Activated B cell treated with CpG ODN at 0.5 μM for 24 hours (primary cell): ENCODE measurements at regions of chr16 and their contacts with region 1.

Region 1: DNA sequence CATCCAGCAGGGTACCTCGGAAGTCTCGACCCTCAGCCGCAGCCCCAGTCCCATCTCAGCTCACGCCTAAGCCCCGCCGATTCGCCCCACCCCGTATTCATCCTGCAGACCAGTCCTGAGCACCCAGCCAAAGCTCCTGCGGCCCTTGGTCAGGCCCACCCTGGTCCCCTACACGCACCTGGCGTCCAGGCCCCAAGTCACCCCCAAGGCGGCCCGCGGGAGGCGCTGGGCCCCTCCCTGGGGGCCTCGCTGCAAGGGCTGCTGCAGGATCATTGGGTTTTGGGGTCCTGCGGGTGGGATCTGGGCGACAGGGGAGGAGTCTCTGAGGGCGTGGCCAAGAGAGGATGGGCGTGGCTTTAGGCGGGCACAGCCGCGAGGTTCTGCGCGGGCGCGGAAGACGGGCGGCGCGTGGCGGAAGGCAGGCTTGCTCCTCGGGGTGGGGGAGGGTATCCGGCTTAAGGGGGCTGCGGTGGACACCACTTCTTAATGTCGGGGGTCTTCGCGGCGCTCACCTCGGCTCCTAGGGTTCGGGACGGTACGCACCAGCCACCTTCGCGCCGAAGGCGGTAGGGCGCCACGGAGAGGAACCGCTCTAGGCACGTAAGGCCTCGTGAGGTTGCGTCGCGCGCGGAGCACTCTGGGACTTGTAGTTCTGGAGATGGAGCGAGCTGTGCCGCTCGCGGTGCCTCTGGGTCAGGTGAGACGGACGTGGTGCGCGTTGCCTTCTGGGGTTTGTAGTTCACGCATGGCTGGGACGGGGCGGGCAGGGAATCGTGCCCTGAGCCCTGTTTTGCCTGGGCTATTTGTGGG is at the starts of genes HCFC1R1 and THOC6:
- DNase-seq: peak; percentile 93
- ATAC-seq: peak; percentile 76
- H3K4me3 Mint-ChIP-seq: peak within 1 kb of the TSS; percentile 92
- H3K27ac Mint-ChIP-seq: peak within 1 kb of the TSS; percentile 99
- H3K4me1 Mint-ChIP-seq: peaks cover 45% of the 10 kb centered on the region
- H3K27me3 Mint-ChIP-seq: peaks cover 1% of the 10 kb centered on the region
- CTCF ChIP-seq: no peak
- total RNA-seq, gene HCFC1R1: 17.7 and 20.4 TPM in 2 replicates
- total RNA-seq, gene THOC6: 45.8 and 47.1 TPM in 2 replicates

Region 2: DNA sequence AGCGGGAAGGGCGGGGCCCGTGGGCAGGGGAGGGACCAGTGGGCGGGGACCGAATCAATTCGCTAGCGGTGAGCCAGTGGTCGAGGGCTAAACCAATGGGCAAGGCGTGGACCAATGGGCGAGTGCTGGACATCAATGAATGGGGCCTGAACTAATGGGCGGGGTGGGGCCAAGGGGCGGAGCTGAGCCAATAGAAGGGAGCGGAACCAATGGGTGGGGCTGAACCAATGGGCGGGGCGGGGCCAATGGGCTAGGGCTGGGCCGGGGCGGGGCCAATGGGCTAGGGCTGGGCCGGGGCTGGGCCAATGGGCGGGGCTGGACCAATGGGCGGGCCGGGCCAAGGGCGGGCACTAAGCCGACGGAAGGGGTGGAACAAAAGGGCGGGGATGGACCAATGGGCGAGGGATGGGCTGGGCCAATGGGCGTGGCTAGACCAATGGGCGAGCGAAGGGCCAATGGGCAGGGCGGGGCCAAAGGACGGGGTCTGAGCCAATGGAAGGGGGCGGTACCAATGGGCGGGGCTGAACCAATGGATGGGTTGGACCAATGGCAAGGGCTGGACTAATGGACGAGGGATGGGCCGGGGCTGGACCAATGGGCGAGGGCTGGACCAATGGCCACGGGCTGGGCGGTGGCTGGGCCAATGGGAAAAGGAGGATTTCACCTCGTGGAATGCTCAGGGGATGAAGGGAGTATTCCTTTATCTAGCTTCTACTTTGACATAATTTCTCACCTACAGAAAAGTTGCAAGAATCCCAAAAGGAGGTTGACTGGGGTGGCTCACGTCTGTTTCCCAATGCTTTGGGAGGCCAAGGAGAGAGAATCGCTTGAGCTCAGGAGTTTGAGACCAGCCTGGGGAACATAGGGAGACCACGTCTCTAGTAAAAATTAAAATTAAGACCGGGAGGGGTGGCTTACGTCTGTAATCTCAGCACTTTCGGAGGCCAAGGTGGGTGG is 118.2 kb before region 1 on chr16:
- CTCF ChIA-PET with region 1: no interaction called
- POLR2A ChIA-PET with region 1: no interaction called
- intact Hi-C with region 1: loop called (anchors 5 kb)
- DNase-seq: peak; percentile 82
- ATAC-seq: peak; percentile 80
- H3K4me3 Mint-ChIP-seq: peak overlapping the region; percentile 91
- H3K27ac Mint-ChIP-seq: peak overlapping the region; percentile 41
- H3K4me1 Mint-ChIP-seq: peaks cover 27% of the 10 kb centered on the region
- H3K27me3 Mint-ChIP-seq: no peaks in the 10 kb centered on the region
- CTCF ChIP-seq: no peak

Region 3: DNA sequence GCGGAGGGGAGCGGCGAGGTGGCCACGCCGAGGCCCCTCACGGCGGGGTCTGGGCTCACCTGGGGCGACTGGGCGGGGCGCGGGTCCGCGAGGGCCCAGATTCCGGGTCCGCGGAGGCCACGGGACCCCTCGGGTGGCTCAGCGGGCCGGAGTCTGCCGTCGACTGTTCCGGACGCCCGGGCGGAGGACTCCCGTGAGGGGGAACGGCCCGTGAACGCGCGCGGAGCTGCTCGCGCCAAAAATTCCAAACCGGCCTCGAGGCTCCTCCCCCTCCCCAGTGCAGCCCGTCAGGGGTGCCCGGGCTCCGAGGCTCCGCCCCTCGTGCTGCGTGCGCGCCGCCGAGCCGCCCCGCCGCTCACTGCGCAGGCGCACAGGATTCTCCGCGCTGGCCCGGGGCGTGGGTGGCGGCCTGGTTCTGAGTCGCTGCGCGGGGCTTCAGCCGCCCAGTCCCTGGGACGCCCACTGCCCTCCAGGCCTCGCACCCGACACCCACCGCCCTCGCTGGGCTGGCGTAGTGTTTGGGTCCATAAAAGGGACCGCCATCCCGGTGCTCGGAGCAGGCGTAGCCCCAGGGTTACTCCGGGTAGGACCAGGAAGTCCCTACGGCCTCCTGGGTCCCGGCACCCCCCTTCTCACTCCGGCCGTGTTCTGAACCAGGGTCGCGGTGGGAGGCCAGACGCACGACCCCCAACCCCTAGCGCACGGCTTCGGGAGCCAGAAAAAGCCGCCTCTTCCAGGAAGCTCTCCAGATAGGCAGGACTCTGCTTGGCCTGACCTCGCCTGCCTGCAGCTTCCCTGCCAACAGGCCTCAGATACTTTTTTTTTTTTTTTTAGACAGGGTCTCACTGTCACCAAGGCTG is 43.4 kb before region 1 on chr16 and contains the start of gene PKMYT1:
- CTCF ChIA-PET with region 1: interaction called, 3 read pairs
- POLR2A ChIA-PET with region 1: interaction called, 5 read pairs
- intact Hi-C with region 1: loop called (anchors 1 kb)
- DNase-seq: peak; percentile 97
- ATAC-seq: peak; percentile 90
- H3K4me3 Mint-ChIP-seq: peak within 1 kb of the TSS; percentile 84
- H3K27ac Mint-ChIP-seq: peak within 1 kb of the TSS; percentile 78
- H3K4me1 Mint-ChIP-seq: peaks cover 27% of the 10 kb centered on the region
- H3K27me3 Mint-ChIP-seq: no peaks in the 10 kb centered on the region
- CTCF ChIP-seq: no peak
- total RNA-seq, gene PKMYT1: 3.8 and 4.3 TPM in 2 replicates

Region 4: DNA sequence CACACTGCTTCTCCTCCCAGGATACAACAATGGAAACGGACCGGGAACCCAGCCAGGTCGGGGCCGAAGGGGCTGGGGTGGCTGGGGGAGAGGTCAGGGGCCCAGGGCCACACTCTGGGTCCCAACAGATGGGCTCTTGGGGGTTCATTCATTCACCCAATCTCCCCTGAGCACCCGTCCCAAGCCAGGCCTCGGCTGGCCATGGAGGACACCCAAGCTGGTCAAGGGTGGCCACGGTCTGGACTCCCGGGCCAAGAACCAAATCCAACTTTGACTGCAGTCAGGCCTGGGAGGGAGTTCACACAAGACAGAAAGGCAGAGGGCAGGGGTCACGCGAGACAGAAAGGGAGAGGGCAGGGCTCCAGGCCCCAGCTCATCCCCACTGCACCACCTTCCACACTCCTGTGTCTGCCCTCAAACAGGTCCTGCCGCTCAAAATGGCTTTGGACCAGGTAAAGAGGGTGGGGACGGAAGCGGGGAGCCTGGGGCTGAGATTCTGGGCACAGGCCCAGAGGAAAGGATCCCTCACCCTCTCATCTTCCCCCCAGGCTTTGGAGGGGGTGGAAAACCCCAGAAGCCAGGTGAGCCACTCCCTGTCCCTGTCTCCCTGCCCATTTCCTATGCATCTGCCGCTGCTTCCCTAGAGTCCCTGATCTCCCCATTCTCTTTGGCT is 31.4 kb before region 1 on chr16:
- CTCF ChIA-PET with region 1: no interaction called
- POLR2A ChIA-PET with region 1: no interaction called
- intact Hi-C with region 1: no loop called
- DNase-seq: no peak
- ATAC-seq: no peak
- H3K4me3 Mint-ChIP-seq: no peak overlapping the region
- H3K27ac Mint-ChIP-seq: no peak overlapping the region
- H3K4me1 Mint-ChIP-seq: no peaks in the 10 kb centered on the region
- H3K27me3 Mint-ChIP-seq: peaks cover 3% of the 10 kb centered on the region
- CTCF ChIP-seq: no peak

Region 5: DNA sequence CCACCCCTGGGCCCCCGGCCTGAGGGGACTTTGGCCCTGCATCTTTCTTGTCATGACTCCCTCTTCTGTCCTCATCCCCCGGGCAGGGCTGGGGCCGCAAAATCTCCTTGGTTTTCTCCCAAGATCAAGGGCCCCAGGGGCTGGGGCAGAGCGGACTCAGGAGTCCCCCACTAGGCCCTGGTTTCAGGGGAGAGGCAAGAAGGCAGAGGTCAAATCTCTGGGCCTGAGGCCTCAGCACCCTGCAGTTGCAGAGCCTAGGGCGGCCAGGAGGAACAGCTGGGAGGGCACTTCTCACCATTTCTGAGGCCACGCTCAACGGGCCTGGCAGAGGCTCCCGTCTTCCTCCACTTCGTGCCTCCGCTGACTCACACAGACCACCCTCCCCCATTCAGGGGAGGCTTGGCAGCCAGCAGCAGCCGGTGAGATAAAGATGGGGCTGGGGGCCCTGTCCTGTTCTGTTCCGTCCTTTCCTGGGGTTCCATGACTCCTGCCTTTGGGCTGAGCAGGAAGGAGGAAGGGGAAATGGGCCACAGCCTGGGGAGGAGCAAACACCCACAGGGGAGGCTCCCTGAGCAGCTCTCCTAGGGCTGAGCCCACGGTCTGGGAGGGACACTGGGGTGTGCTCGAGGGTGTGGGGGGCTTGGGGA is 62.8 kb after region 1 on chr16:
- CTCF ChIA-PET with region 1: no interaction called
- POLR2A ChIA-PET with region 1: no interaction called
- intact Hi-C with region 1: no loop called
- DNase-seq: no peak
- ATAC-seq: no peak
- H3K4me3 Mint-ChIP-seq: no peak overlapping the region
- H3K27ac Mint-ChIP-seq: no peak overlapping the region
- H3K4me1 Mint-ChIP-seq: peaks cover 5% of the 10 kb centered on the region
- H3K27me3 Mint-ChIP-seq: peaks cover 10% of the 10 kb centered on the region
- CTCF ChIP-seq: no peak

Region 6: GRCh38 chr16:3099732-3100499 is 76.0 kb after region 1 on chr16:
- CTCF ChIA-PET with region 1: no interaction called
- POLR2A ChIA-PET with region 1: interaction called, 4 read pairs
- intact Hi-C with region 1: loop called (anchors 5 kb)
- DNase-seq: peak; percentile 76
- ATAC-seq: peak; percentile 85
- H3K4me3 Mint-ChIP-seq: peak overlapping the region; percentile 79
- H3K27ac Mint-ChIP-seq: peak overlapping the region; percentile 32
- H3K4me1 Mint-ChIP-seq: peaks cover 37% of the 10 kb centered on the region
- H3K27me3 Mint-ChIP-seq: no peaks in the 10 kb centered on the region
- CTCF ChIP-seq: no peak

Region 7: GRCh38 chr16:3123986-3124886 is 100.4 kb after region 1 on chr16:
- CTCF ChIA-PET with region 1: interaction called, 87 read pairs
- POLR2A ChIA-PET with region 1: interaction called, 5 read pairs
- intact Hi-C with region 1: loop called (anchors 5 kb)
- DNase-seq: peak; percentile 93
- ATAC-seq: peak; percentile 90
- H3K4me3 Mint-ChIP-seq: peak overlapping the region; percentile 98
- H3K27ac Mint-ChIP-seq: peak overlapping the region; percentile 96
- H3K4me1 Mint-ChIP-seq: peaks cover 35% of the 10 kb centered on the region
- H3K27me3 Mint-ChIP-seq: no peaks in the 10 kb centered on the region
- CTCF ChIP-seq: no peak

Region 8: DNA sequence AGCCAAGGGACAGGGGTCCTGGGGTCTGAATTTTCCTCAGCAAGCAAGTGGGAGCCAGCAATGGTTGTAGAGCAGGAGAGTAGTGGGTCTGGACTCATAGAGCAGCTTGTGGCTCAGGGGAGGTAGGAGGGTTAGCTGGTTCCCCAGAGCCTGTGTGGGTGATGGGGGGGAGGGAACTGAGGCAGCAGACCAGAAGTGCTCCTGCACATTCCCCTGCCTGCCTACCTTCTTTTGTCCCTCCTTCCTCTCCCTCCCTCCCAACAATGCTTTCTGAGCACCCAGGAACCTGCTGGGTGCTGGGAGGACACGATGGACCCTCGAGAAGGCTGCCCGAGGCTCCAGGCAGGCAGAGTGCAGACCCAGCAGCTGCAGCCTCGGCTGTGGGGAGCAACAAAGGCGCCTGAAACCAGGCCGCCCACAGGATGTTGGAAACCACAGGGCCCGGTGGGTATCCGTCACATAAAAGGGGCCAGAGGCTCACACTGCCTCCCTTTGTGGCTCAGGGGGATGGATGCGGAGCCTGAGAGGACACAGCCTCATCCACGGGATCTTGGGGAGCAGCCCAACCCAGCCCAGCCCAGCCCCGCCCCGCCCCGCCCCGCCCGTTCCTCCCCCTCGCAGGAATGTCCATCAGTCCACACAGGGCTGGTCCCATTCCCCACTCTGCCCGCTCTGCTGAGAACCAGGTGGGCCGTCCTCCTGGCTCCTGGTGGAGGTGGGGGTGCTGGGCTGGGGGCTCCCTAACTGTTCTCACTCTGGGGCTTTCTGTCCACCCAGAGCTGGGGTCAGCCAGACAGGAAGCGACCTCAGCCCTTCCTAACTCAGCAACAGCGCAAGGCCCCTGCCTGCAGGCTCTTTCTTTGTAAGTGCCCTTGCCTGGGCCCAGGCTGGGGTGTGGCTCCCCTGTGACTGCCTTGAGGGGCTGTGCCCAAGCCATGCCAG is 555.0 kb after region 1 on chr16:
- CTCF ChIA-PET with region 1: no interaction called
- POLR2A ChIA-PET with region 1: interaction called, 10 read pairs
- intact Hi-C with region 1: no loop called
- DNase-seq: no peak
- ATAC-seq: peak; percentile 62
- H3K4me3 Mint-ChIP-seq: peak overlapping the region; percentile 78
- H3K27ac Mint-ChIP-seq: peak overlapping the region; percentile 92
- H3K4me1 Mint-ChIP-seq: peaks cover 55% of the 10 kb centered on the region
- H3K27me3 Mint-ChIP-seq: no peaks in the 10 kb centered on the region
- CTCF ChIP-seq: no peak